Dorsolateral prefrontal cortex (tissue), 120 donors: ENCODE measurements at regions of chr1 and their contacts with region 1.

Region 1: DNA sequence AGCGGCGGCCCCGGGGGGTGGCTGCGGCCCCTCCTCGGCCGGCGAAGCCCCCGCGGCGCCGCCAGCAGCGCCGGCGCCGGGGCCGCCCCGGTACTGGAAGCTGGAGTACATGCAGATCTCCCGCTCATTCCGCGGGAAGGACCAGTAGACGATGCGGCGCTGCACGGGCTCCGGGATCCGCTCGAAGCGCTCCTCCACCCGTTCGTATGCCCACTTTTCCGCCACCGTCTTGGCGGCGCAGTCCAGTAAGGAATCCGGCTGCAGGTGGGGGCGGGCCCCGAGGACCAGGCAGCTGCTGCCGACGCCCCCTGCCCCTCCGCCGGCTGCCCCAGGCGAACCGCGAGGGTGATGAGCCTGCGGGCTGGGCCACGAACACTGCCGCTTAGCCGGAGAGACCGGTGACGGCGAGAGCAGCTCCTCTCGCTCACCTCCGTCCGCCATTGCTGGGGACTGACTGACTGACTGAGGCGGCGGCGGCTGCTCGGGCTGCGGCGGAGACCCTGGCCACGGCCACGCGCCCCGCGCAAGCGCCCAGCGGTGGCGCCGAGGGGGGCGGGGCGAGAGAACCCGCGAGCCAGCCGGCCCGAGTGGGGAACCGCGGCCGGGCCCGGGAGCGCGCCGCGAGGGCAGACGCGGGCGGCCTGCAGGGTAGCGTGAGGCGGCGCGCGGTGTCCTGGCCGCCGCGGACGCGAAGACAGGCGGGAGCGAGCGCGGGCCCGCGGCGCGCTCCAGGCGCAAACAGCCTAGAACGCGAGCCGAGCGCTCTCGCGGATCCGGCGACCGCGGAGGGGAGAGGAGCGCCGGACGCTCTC is at the start of gene ZSWIM5:
- DNase-seq: peak; percentile 48 to 87 (median 71)
- H3K4me3 ChIP-seq: peak within 1 kb of the TSS; percentile 66 to 96 (median 89)
- H3K27ac ChIP-seq: peak within 1 kb of the TSS; percentile 79 to 98 (median 95)
- H3K27me3 ChIP-seq: no peaks in the 10 kb centered on the region
- CTCF ChIP-seq: peak in 5 of 56 donors; percentile 9 to 29 (median 13)
- total RNA-seq, gene ZSWIM5: 5.6 to 11.4 (median 8.0) TPM

Region 2: DNA sequence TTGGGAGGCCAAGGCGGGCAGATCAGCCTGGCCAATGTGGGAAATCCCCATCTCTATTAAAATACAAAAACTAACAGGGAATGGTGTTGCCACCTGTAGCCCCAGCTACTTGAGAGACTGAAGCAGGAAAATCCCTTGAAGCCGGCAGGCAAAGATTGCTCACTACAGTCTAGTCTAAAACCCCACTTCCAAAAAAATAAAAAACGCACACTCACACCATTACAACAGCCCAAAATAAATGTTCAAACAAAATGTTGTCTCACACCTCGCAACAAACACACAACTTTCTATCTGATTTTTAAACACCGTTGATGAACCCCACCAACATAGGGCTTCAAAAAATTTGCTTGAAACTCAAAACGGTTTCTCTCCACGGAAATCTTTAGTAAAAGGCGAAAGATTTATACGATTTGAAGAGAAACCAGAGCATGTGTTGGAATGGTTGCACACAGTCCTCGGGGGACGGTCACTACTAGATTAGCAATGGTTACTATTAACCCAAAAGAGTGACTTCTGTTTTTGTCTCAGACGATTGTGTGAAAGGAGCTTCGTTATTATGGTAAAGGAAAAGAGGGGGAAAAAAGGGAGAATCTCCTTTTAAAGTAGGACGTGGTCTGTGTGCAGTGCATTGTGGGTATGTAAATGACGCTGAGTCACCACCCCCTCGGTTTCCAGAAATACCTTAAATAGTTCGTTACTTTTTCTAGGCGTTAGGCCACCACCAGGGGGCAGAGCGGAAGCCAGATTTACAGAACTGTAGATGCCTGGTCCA is 475.2 kb before region 1 on chr1 and contains the start of gene RNU5D-1:
- intact Hi-C with region 1: loop called in 1 of 2 experiments (anchors 10 kb)
- DNase-seq: peak; percentile 83 to 99 (median 94)
- H3K4me3 ChIP-seq: peak within 1 kb of the TSS in 58 of 59 donors; percentile 11 to 62 (median 44)
- H3K27ac ChIP-seq: peak within 1 kb of the TSS; percentile 78 to 99 (median 96)
- H3K27me3 ChIP-seq: no peaks in the 10 kb centered on the region
- CTCF ChIP-seq: peak; percentile 72 to 97 (median 84)
- total RNA-seq, gene RNU5D-1: not detected

Region 3: DNA sequence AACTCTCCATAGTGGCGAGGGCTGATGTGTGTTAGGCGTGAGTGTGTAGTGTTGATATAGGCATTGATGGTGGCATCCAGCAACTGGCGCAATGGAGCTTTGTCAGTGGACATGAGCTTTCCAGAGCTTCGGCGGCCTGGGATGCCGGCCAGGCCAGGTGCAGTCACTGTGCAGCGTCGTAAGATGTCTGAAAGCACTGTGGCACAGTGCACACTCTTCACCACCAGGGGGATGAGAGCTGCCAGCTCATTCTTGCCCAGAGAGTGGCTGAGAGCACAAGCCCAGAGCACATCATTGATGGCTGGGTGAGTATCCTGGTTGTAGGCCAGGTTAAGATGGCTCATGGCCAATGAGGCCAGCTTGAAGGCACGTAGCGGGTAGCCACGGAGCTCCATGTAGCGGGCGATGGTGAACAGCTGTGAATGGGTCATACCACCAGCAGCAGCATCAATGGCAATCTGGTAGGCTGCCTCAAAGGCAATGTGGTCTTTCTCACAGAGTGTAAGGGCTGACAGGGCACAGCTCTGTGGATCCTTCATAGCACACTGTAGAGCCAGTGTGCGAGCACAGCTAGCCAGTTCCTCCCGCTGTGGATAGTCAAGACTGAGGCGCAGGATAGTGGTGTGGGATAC is 187.4 kb before region 1 on chr1:
- intact Hi-C with region 1: loop called (anchors 5 kb)
- DNase-seq: peak; percentile 42 to 88 (median 64)
- H3K4me3 ChIP-seq: peak overlapping the region in 1 of 59 donors; percentile 9
- H3K27ac ChIP-seq: peak overlapping the region in 18 of 59 donors; percentile 3 to 64 (median 29)
- H3K27me3 ChIP-seq: no peaks in the 10 kb centered on the region
- CTCF ChIP-seq: peak; percentile 47 to 85 (median 72)

Region 4: GRCh38 chr1:45339789-45340570 is 133.9 kb after region 1 on chr1 and contains the starts of genes MUTYH and TOE1:
- intact Hi-C with region 1: no loop called
- DNase-seq: peak; percentile 80 to 92 (median 89)
- H3K4me3 ChIP-seq: peak within 1 kb of the TSS; percentile 65 to 98 (median 89)
- H3K27ac ChIP-seq: peak within 1 kb of the TSS; percentile 84 to 100 (median 97)
- H3K27me3 ChIP-seq: no peaks in the 10 kb centered on the region
- CTCF ChIP-seq: peak in 42 of 56 donors; percentile 5 to 65 (median 26)
- total RNA-seq, gene MUTYH: 18.4 to 56.7 (median 33.5) TPM
- total RNA-seq, gene TOE1: 3.3 to 10.9 (median 7.1) TPM

Region 5: GRCh38 chr1:45526179-45526578 is 320.1 kb after region 1 on chr1:
- intact Hi-C with region 1: no loop called
- DNase-seq: no peak
- H3K4me3 ChIP-seq: no peak overlapping the region
- H3K27ac ChIP-seq: no peak overlapping the region
- H3K27me3 ChIP-seq: no peaks in the 10 kb centered on the region
- CTCF ChIP-seq: no peak